Heart left ventricle (tissue), 16 donors: ENCODE measurements at regions of chr1 and their contacts with region 1.

Region 1: DNA sequence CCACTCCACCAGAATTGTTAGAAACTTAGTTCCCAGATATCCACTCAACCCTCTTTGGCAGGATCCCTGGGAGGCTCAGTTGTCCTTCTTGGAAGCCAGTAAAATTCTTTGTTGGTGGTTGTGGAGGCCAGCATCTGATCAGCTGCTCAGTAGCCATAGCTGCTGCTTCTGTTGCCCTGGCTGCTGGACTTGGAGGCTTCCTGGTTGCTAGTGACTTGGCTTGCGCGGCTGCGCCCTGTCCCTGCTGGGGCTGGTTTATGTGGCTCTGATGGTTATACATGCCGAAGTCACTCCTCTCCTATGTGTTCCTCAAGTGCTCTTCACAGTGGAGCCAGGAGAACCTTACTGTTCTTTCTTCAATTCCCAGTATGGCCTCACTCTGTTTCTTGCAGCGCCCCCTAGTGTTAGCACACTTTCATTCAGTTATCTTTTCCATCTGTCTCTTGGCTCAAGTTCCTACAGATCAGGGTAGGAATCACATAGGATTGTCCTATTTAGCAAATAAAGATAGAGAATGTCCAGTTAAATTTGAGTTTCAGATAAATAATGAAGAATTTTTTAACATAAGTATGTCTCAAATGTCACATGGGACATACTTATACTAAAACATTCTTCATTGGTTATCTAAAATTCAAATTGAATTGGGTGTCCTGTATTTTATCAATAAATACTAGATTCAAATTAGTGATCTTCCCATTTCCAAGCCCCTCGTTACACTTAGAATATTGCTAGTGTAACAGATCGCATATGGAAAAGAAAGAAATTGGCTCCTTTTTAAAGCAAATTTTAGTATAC is 176.4 kb downstream of the TGFB2 start:
- DNase-seq: peak in 4 of 5 donors; percentile 28 to 48 (median 32)
- ATAC-seq: no peak
- H3K4me3 ChIP-seq: no peak overlapping the region
- H3K27ac ChIP-seq: no peak overlapping the region
- H3K4me1 ChIP-seq: no peaks in the 10 kb centered on the region
- H3K27me3 ChIP-seq: no peaks in the 10 kb centered on the region
- CTCF ChIP-seq: peak; percentile 48 to 79 (median 68)
- POLR2A ChIP-seq: no peak

Region 2: GRCh38 chr1:218339267-218339831 is 182.2 kb before region 1 on chr1:
- intact Hi-C with region 1: loop called in 6 of 10 experiments (anchors 2 to 10 kb)
- DNase-seq: no peak
- ATAC-seq: no peak
- H3K4me3 ChIP-seq: no peak overlapping the region
- H3K27ac ChIP-seq: no peak overlapping the region
- H3K4me1 ChIP-seq: peaks cover 0 to 6% (median 0%) of the 10 kb centered on the region in 12 donors
- H3K27me3 ChIP-seq: no peaks in the 10 kb centered on the region
- CTCF ChIP-seq: peak; percentile 55 to 83 (median 77)
- POLR2A ChIP-seq: no peak

Region 3: GRCh38 chr1:218361298-218362065 is 160.1 kb before region 1 on chr1:
- intact Hi-C with region 1: loop called in 4 of 10 experiments (anchors 5 to 10 kb)
- DNase-seq: peak in 1 of 5 donors; percentile 39
- ATAC-seq: peak in 2 of 4 donors; percentile 59 to 62
- H3K4me3 ChIP-seq: no peak overlapping the region
- H3K27ac ChIP-seq: peak overlapping the region in 4 of 12 donors; percentile 6 to 22 (median 8)
- H3K4me1 ChIP-seq: peaks cover 0 to 50% (median 15%) of the 10 kb centered on the region in 12 donors
- H3K27me3 ChIP-seq: no peaks in the 10 kb centered on the region
- CTCF ChIP-seq: peak; percentile 26 to 69 (median 54)
- POLR2A ChIP-seq: no peak